ENCODE measurements at regions of chr12 and their contacts with region 1.

Region 1: DNA sequence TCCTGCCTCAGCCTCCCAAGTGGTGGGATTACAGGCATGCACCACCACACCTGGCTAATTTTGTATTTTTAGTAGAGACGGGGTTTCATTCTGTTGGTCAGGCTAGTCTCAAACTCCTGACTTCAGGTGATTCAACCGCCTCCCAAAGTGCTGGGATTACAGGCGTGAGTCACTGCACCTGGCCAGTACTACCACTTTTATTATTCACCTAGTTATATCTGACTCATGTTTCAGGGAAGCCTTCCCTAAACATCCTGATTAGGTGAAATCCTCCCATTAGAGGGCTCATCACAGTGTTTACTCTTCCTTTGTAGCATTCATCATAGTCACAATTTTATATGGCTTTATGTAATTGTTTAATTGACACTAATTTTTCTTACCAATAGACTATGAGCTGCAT is 295.3 kb upstream of the SOX5 start:
- DNase-seq: no peak
- ATAC-seq: no peak
- H3K4me3 ChIP-seq: no peak overlapping the region
- H3K4me3 Mint-ChIP-seq: no peak overlapping the region
- H3K27ac ChIP-seq: no peak overlapping the region
- H3K27ac Mint-ChIP-seq: no peak overlapping the region
- H3K4me1 ChIP-seq: no peaks in the 10 kb centered on the region
- H3K4me1 Mint-ChIP-seq: no peaks in the 10 kb centered on the region
- H3K27me3 ChIP-seq: no peaks in the 10 kb centered on the region
- H3K27me3 Mint-ChIP-seq: no peaks in the 10 kb centered on the region
- CTCF ChIP-seq: no peak

Region 2: DNA sequence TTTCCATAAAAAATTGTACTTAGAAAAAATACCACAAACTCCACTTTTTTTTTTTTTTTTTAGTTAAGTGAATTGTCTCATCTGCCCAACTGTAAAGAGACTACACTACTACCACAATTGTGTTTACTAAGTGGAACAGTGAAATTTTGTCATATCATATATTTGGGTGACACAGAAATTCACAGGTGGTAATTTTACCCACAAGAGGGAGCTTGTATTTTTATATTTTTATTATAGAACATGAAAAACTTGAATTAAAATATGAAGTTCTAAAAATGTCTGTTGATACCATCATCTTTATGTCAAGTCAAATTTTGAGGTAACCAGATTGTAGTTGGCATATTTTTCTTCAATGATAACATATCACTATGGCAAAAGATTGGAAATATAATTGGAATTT is 34.0 kb after region 1 on chr12:
- CTCF ChIA-PET with region 1: no interaction called
- POLR2A ChIA-PET with region 1: no interaction called
- intact Hi-C with region 1: loop called in 1 of 2 experiments (anchors 1 kb)
- DNase-seq: no peak
- ATAC-seq: no peak
- H3K4me3 ChIP-seq: no peak overlapping the region
- H3K4me3 Mint-ChIP-seq: no peak overlapping the region
- H3K27ac ChIP-seq: no peak overlapping the region
- H3K27ac Mint-ChIP-seq: no peak overlapping the region
- H3K4me1 ChIP-seq: no peaks in the 10 kb centered on the region
- H3K4me1 Mint-ChIP-seq: no peaks in the 10 kb centered on the region
- H3K27me3 ChIP-seq: no peaks in the 10 kb centered on the region
- H3K27me3 Mint-ChIP-seq: no peaks in the 10 kb centered on the region
- CTCF ChIP-seq: no peak